Heart right ventricle (tissue), 16 donors: ENCODE measurements at regions of chr19 and their contacts with region 1.

Region 1: DNA sequence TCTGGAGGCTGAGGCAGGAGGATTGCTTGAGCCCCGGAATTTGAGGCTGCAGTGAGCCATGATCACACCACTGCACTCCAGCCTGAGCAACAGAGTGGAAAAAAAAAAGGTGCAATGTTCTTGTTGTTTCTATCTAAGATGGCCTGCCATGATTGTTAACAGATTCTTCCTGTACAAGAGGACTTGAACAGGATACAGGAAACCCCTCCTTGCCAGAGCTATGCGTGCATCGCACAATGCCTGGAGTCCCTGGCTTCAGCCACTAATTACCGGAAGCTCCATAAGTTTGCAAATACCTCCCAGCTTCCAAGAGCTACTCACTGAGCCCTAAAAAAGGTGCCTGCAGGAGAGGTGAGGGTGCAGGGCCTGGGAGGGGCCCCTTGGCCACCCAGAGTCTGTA is 13.1 kb upstream of the HIF3A start:
- DNase-seq: peak; percentile 29 to 58
- ATAC-seq: peak; percentile 66 to 89 (median 85)
- H3K4me3 ChIP-seq: peak overlapping the region in 1 of 10 donors; percentile 8
- H3K27ac ChIP-seq: peak overlapping the region in 9 of 10 donors; percentile 17 to 80 (median 60)
- H3K4me1 ChIP-seq: peaks cover 0 to 32% (median 15%) of the 10 kb centered on the region in 9 donors
- H3K27me3 ChIP-seq: peaks cover 0 to 4% (median 0%) of the 10 kb centered on the region in 7 donors
- CTCF ChIP-seq: no peak

Region 2: GRCh38 chr19:46299004-46299509 is 15.3 kb after region 1 on chr19:
- intact Hi-C with region 1: loop called in 2 of 10 experiments (anchors 1 to 2 kb)
- DNase-seq: peak; percentile 97 to 98
- ATAC-seq: peak; percentile 72 to 89 (median 80)
- H3K4me3 ChIP-seq: peak overlapping the region; percentile 45 to 72 (median 60)
- H3K27ac ChIP-seq: peak overlapping the region; percentile 87 to 99 (median 96)
- H3K4me1 ChIP-seq: peaks cover 27 to 76% (median 57%) of the 10 kb centered on the region in 9 donors
- H3K27me3 ChIP-seq: peaks cover 0 to 18% (median 0%) of the 10 kb centered on the region in 7 donors
- CTCF ChIP-seq: no peak

Region 3: GRCh38 chr19:46384396-46384795 is 100.6 kb after region 1 on chr19:
- intact Hi-C with region 1: loop called in 1 of 10 experiments (anchors 5 kb)
- DNase-seq: peak; percentile 46 to 47
- ATAC-seq: peak; percentile 62 to 86 (median 78)
- H3K4me3 ChIP-seq: no peak overlapping the region
- H3K27ac ChIP-seq: peak overlapping the region in 3 of 10 donors; percentile 19 to 39 (median 30)
- H3K4me1 ChIP-seq: peaks cover 0 to 41% (median 18%) of the 10 kb centered on the region in 9 donors
- H3K27me3 ChIP-seq: no peaks in the 10 kb centered on the region
- CTCF ChIP-seq: no peak

Region 4: DNA sequence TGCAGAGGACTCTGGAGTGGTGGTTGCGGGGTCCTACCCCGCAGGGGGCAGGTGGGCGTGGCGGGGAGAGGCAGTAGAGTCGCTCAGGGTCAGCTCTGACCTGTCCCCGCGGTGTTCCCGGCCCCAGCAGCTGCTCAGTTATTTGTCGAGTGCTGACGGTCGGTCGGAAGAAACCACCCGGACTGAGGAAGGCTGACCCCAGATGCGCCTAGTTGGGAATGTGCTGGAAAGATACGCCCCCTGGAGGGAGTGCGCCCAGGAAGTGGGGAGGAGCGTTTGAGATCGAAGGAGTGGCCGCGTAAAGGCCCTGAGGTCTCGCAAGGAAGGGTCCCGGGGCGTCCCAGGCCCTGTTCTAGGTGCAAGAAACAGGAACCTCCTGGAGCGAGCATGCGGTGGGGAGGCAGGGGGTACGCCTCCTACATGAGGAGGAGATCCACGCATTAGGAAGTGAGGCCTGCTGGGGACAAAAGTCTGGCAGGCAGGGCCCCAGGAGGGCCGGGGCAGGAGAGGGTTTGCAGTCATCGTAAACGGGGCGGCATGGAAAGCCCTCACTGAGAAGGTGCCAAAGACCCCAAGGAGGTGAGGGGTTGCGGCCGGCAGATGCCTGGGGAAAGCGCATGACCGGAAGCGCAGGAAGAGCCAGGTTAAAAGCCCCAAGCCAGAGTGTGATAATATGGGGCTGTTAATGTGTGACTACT is 120.4 kb after region 1 on chr19:
- intact Hi-C with region 1: loop called in 5 of 10 experiments (anchors 5 to 10 kb)
- DNase-seq: peak; percentile 29 to 48
- ATAC-seq: peak; percentile 22 to 63 (median 56)
- H3K4me3 ChIP-seq: peak overlapping the region; percentile 16 to 55 (median 42)
- H3K27ac ChIP-seq: peak overlapping the region in 9 of 10 donors; percentile 16 to 75 (median 58)
- H3K4me1 ChIP-seq: peaks cover 5 to 49% (median 24%) of the 10 kb centered on the region in 9 donors
- H3K27me3 ChIP-seq: peaks cover 0 to 77% (median 46%) of the 10 kb centered on the region in 7 donors
- CTCF ChIP-seq: peak in 4 of 9 donors; percentile 18 to 36 (median 27)

Region 5: DNA sequence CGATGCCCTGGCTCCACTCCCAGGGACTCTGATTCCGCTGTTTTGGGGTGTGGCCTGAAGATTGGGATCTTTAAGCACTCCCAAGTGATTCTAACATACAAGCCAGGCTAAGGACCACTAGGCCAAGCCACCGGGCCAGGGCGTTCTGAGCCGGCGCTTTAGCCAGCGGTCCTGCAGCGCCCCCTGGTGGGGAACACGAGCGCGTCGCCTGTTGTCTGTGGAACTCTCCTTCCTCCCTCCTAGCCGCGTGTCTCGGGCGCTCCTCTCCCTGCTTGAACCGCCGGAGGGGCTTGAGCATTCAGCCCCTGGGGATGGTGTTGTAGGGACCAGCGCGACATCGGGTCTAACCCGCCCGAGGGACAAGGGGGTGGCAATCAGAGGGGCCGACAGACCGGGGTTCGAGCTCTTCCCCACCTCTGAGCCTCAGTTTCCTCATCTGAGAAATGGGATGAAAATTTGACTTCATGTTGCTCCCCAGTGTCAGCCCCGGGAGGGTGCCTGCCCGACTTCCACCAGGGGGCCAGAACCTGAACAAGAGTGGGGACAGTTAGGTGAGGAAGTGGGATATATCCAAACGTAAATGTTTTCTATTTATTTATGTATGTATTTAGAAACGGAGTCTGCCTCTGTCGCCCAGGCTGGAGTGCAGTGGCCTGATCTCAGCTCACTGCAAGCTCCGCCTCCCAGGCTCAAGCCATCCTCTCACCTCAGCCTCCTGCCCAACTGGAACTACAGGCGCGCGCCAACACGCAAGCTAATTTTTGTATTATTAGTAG is 229.9 kb after region 1 on chr19:
- intact Hi-C with region 1: loop called in 7 of 10 experiments (anchors 2 to 10 kb)
- DNase-seq: peak; percentile 77 to 80
- ATAC-seq: peak; percentile 85 to 95 (median 91)
- H3K4me3 ChIP-seq: no peak overlapping the region
- H3K27ac ChIP-seq: no peak overlapping the region
- H3K4me1 ChIP-seq: peaks cover 0 to 8% (median 0%) of the 10 kb centered on the region in 9 donors
- H3K27me3 ChIP-seq: peaks cover 0 to 16% (median 5%) of the 10 kb centered on the region in 7 donors
- CTCF ChIP-seq: peak; percentile 77 to 99 (median 94)